HCT116 (cell line): ENCODE measurements at regions of chr11 and their contacts with region 1.

Region 1: DNA sequence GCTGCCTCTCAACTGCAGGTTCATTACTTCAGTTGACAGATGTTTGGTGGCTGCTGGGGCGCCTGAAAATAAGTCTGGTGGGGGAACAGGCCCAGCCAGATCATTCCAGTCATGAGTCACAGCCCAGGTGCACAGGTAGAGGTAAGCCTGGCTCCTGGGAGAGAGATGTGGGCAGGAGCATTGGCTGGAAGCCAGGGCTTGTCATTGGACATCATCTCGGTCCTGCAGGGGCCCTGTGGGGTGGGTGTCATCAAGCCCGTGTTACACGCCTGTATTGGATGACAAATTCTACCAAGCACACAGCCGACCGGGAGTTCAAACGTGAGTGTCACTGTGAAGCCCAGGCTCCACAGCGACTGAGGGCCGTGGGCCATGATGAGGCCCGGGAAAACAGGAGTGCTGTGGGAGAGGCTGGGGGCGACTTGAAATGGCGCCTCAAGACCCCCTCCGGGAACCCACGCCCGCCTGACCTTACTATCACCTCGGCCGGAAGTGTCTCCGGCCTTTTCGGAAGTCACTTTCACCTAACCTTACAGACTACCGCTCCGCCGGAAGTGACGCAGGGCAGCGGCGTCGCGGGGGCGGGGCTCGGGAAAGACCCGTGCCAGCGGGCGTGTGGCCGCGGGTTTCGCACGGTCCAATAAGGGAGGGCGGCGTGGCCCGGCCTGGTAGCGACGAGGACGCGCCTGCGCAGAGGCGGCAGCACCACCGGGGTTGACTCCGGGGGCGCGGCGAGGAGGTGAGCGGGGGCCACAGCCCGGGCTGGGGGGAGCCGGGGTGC is at the start of gene FKBP2:
- DNase-seq: peak; percentile 91
- ATAC-seq: peak; percentile 65
- H3K4me3 ChIP-seq: peak within 1 kb of the TSS; percentile 70 to 91
- H3K27ac ChIP-seq: peak within 1 kb of the TSS; percentile 96
- H3K4me1 ChIP-seq: peaks cover 32 to 66% of the 10 kb centered on the region in 2 experiments
- H3K27me3 ChIP-seq: no peaks in the 10 kb centered on the region
- CTCF ChIP-seq: no peak
- POLR2A ChIP-seq: peak; percentile 89
- RAD21 ChIP-seq: no peak
- total RNA-seq, gene FKBP2: 69.2 TPM

Region 2: DNA sequence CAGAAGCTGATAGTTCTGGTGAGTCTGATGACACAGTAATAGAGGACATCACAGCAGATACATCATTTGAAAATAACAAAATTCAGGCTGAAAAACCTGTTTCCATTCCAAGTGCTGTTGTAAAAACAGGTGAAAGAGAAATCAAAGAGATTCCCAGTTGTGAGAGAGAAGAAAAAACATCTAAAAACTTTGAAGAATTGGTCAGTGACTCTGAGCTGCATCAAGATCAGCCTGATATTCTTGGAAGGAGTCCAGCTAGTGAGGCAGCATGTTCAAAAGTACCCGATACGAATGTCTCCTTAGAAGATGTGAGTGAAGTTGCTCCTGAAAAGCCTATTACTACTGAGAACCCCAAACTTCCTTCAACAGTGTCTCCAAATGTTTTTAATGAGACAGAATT is 520.6 kb before region 1 on chr11:
- CTCF ChIA-PET with region 1: no interaction called
- POLR2A ChIA-PET with region 1: no interaction called
- RAD21 ChIA-PET with region 1: no interaction called
- intact Hi-C with region 1: no loop called
- DNase-seq: no peak
- ATAC-seq: no peak
- H3K4me3 ChIP-seq: no peak overlapping the region
- H3K27ac ChIP-seq: no peak overlapping the region
- H3K4me1 ChIP-seq: 0 out of 4 replicates have a peak, but pooled peaks cover 0 to 2% of the 10 kb centered on the region in 2 experiments
- H3K27me3 ChIP-seq: no peaks in the 10 kb centered on the region
- CTCF ChIP-seq: no peak
- POLR2A ChIP-seq: no peak
- RAD21 ChIP-seq: no peak

Region 3: GRCh38 chr11:64284048-64284961 is 43.7 kb after region 1 on chr11 and contains the start of gene BAD:
- CTCF ChIA-PET with region 1: no interaction called
- POLR2A ChIA-PET with region 1: no interaction called
- RAD21 ChIA-PET with region 1: no interaction called
- intact Hi-C with region 1: loop called (anchors 1 kb)
- DNase-seq: peak; percentile 82
- ATAC-seq: peak; percentile 87
- H3K4me3 ChIP-seq: peak within 1 kb of the TSS; percentile 77 to 80
- H3K27ac ChIP-seq: peak within 1 kb of the TSS; percentile 83
- H3K4me1 ChIP-seq: peaks cover 14 to 27% of the 10 kb centered on the region in 2 experiments
- H3K27me3 ChIP-seq: no peaks in the 10 kb centered on the region
- CTCF ChIP-seq: no peak
- POLR2A ChIP-seq: peak; percentile 23
- RAD21 ChIP-seq: no peak
- total RNA-seq, gene BAD: 51.9 TPM